B cell (primary cell): ENCODE measurements at regions of chr19 and their contacts with region 1.

Region 1: DNA sequence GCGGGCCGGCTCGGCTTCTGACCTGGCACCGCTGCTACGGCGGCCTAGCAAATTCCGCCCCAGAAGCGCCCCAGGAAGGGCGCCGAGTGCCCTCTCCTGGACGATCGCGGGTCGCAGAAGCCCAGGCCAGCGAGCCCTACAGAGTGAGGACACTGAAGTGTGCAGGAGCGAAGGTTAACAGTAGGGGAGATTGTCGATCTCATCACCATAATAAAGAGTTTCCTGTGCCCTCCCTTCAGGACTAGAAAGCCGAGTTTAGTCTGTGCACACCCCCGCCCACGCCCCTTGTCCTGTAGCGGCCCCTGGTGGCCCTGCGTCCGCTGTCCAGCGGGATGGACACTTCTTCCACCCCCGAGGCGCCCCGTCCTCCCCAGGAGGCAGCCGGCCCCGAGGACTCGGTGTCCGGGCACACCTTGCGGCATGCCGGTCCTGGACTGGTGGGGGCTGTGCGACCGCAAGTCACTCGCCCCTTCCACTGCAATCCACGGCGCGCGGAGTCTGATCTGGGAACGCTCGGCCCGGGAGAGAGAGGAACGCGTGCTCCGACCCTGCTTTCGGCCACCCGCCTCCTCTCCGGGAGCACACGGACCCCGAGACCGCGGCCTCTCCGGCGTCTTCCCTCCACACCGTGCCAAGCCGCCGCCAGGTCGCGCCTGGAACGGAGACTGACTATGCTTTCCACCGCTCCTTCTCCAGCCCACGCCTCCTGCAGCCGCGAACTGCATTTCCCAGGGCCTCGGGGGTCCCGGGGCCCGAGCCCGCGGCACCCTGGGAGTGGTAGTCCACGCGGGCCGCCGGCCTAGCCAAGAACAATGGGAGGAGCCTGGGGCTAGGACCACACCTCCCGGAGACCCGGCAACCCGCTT is 769 bp upstream of the KMT2B start:
- DNase-seq: peak; percentile 97
- ATAC-seq: peak; percentile 79
- H3K4me3 ChIP-seq: peak overlapping the region; percentile 39 to 87 (median 76)
- H3K4me3 Mint-ChIP-seq: peak overlapping the region; percentile 98
- H3K27ac ChIP-seq: peak overlapping the region; percentile 68 to 85
- H3K27ac Mint-ChIP-seq: peak overlapping the region; percentile 99
- H3K4me1 ChIP-seq: peaks cover 27 to 66% of the 10 kb centered on the region in 2 donors
- H3K4me1 Mint-ChIP-seq: peaks cover 66% of the 10 kb centered on the region
- H3K27me3 ChIP-seq: no peaks in the 10 kb centered on the region
- H3K27me3 Mint-ChIP-seq: no peaks in the 10 kb centered on the region
- CTCF ChIP-seq: peak; percentile 90

Region 2: GRCh38 chr19:35347171-35347929 is 369.7 kb before region 1 on chr19 and contains the start of gene FFAR1:
- CTCF ChIA-PET with region 1: no interaction called
- POLR2A ChIA-PET with region 1: no interaction called
- intact Hi-C with region 1: loop called (anchors 10 kb)
- DNase-seq: peak; percentile 93
- ATAC-seq: peak; percentile 62
- H3K4me3 ChIP-seq: peak within 1 kb of the TSS in 3 of 5 experiments; percentile 12 to 18 (median 17)
- H3K4me3 Mint-ChIP-seq: peak within 1 kb of the TSS; percentile 82
- H3K27ac ChIP-seq: peak within 1 kb of the TSS; percentile 91 to 92
- H3K27ac Mint-ChIP-seq: peak within 1 kb of the TSS; percentile 96
- H3K4me1 ChIP-seq: peaks cover 72 to 87% of the 10 kb centered on the region in 2 donors
- H3K4me1 Mint-ChIP-seq: peaks cover 75% of the 10 kb centered on the region
- H3K27me3 ChIP-seq: no peaks in the 10 kb centered on the region
- H3K27me3 Mint-ChIP-seq: no peaks in the 10 kb centered on the region
- CTCF ChIP-seq: no peak
- total RNA-seq, gene FFAR1: 3.0 and 3.3 TPM in 2 replicates

Region 3: GRCh38 chr19:35612559-35613321 is 104.3 kb before region 1 on chr19 and contains the start of gene HAUS5:
- CTCF ChIA-PET with region 1: no interaction called
- POLR2A ChIA-PET with region 1: no interaction called
- intact Hi-C with region 1: loop called (anchors 1 kb)
- DNase-seq: peak; percentile 97
- ATAC-seq: peak; percentile 79
- H3K4me3 ChIP-seq: peak within 1 kb of the TSS; percentile 37 to 87 (median 78)
- H3K4me3 Mint-ChIP-seq: peak within 1 kb of the TSS; percentile 92
- H3K27ac ChIP-seq: peak within 1 kb of the TSS; percentile 76 to 77
- H3K27ac Mint-ChIP-seq: peak within 1 kb of the TSS; percentile 98
- H3K4me1 ChIP-seq: peaks cover 38 to 53% of the 10 kb centered on the region in 2 donors
- H3K4me1 Mint-ChIP-seq: peaks cover 42% of the 10 kb centered on the region
- H3K27me3 ChIP-seq: no peaks in the 10 kb centered on the region
- H3K27me3 Mint-ChIP-seq: no peaks in the 10 kb centered on the region
- CTCF ChIP-seq: no peak
- total RNA-seq, gene HAUS5: 32.2 and 35.3 TPM in 2 replicates

Region 4: GRCh38 chr19:35693830-35694599 is 23.0 kb before region 1 on chr19:
- CTCF ChIA-PET with region 1: interaction called, 123 read pairs
- POLR2A ChIA-PET with region 1: interaction called, 6 read pairs
- intact Hi-C with region 1: loop called (anchors 1 kb)
- DNase-seq: peak; percentile 92
- ATAC-seq: peak; percentile 100
- H3K4me3 ChIP-seq: no peak overlapping the region
- H3K4me3 Mint-ChIP-seq: no peak overlapping the region
- H3K27ac ChIP-seq: no peak overlapping the region
- H3K27ac Mint-ChIP-seq: no peak overlapping the region
- H3K4me1 ChIP-seq: no peaks in the 10 kb centered on the region
- H3K4me1 Mint-ChIP-seq: no peaks in the 10 kb centered on the region
- H3K27me3 ChIP-seq: no peaks in the 10 kb centered on the region
- H3K27me3 Mint-ChIP-seq: no peaks in the 10 kb centered on the region
- CTCF ChIP-seq: peak; percentile 99

Region 5: DNA sequence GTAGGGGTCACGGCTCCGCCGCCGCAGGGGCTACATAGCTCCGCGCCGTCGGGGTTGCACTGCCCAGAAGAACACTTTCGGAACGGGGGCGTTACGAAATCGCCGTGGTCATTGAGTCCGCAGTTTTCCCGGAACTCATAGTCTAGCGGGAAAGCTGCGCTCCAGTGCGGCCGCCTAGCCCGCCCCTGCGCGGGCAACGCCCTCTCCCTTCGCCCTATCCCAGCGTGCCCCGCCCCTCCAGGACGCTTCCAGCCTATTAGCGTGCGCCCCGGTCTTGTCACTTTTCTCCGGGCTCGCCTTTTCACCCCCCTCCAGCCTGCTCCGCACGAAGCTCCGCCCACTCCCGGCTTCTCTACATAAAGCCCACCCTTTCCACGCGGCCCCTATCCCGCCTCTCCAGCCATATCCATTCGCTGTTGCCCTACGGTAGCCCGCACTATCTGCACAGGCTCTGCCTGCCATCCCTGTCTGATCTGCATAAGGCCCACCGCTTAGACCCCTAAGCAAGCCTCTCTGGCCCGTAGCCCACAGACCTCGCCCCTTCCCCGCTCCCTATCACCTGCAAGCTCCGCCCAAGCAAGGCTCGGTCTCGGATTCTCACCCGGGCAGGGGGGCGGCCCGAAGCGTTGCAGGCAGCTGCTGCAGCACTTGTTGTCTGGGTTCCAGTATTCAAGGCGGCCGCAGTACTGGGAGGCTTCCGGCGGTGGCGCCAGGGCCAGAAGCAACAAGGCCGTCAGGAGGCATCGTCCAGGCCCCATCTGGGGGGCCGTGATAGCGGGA is 23.6 kb after region 1 on chr19:
- CTCF ChIA-PET with region 1: interaction called, 4 read pairs
- POLR2A ChIA-PET with region 1: interaction called, 10 read pairs
- intact Hi-C with region 1: loop called (anchors 1 kb)
- DNase-seq: peak; percentile 95
- ATAC-seq: peak; percentile 64
- H3K4me3 ChIP-seq: peak overlapping the region; percentile 60 to 93 (median 83)
- H3K4me3 Mint-ChIP-seq: peak overlapping the region; percentile 96
- H3K27ac ChIP-seq: peak overlapping the region; percentile 59 to 73
- H3K27ac Mint-ChIP-seq: peak overlapping the region; percentile 92
- H3K4me1 ChIP-seq: peaks cover 34 to 64% of the 10 kb centered on the region in 2 donors
- H3K4me1 Mint-ChIP-seq: peaks cover 57% of the 10 kb centered on the region
- H3K27me3 ChIP-seq: no peaks in the 10 kb centered on the region
- H3K27me3 Mint-ChIP-seq: no peaks in the 10 kb centered on the region
- CTCF ChIP-seq: no peak

Region 6: GRCh38 chr19:35757749-35758608 is 40.9 kb after region 1 on chr19 and contains the start of gene PROSER3:
- CTCF ChIA-PET with region 1: no interaction called
- POLR2A ChIA-PET with region 1: no interaction called
- intact Hi-C with region 1: loop called (anchors 1 kb)
- DNase-seq: peak; percentile 99
- ATAC-seq: peak; percentile 95
- H3K4me3 ChIP-seq: peak within 1 kb of the TSS; percentile 85 to 99 (median 94)
- H3K4me3 Mint-ChIP-seq: peak within 1 kb of the TSS; percentile 99
- H3K27ac ChIP-seq: peak within 1 kb of the TSS; percentile 91 to 96
- H3K27ac Mint-ChIP-seq: peak within 1 kb of the TSS; percentile 99
- H3K4me1 ChIP-seq: peaks cover 24 to 35% of the 10 kb centered on the region in 2 donors
- H3K4me1 Mint-ChIP-seq: peaks cover 34% of the 10 kb centered on the region
- H3K27me3 ChIP-seq: peaks cover 0 to 26% (median 10%) of the 10 kb centered on the region in 4 experiments
- H3K27me3 Mint-ChIP-seq: peaks cover 17% of the 10 kb centered on the region
- CTCF ChIP-seq: no peak
- total RNA-seq, gene PROSER3: 61.0 and 65.6 TPM in 2 replicates

Region 7: GRCh38 chr19:35899547-35900214 is 182.6 kb after region 1 on chr19:
- CTCF ChIA-PET with region 1: no interaction called
- POLR2A ChIA-PET with region 1: no interaction called
- intact Hi-C with region 1: loop called (anchors 10 kb)
- DNase-seq: peak; percentile 98
- ATAC-seq: peak; percentile 57
- H3K4me3 ChIP-seq: peak overlapping the region; percentile 74 to 100 (median 91)
- H3K4me3 Mint-ChIP-seq: peak overlapping the region; percentile 94
- H3K27ac ChIP-seq: peak overlapping the region; percentile 100
- H3K27ac Mint-ChIP-seq: peak overlapping the region; percentile 98
- H3K4me1 ChIP-seq: peaks cover 53 to 69% of the 10 kb centered on the region in 2 donors
- H3K4me1 Mint-ChIP-seq: peaks cover 64% of the 10 kb centered on the region
- H3K27me3 ChIP-seq: no peaks in the 10 kb centered on the region
- H3K27me3 Mint-ChIP-seq: no peaks in the 10 kb centered on the region
- CTCF ChIP-seq: no peak